ENCODE measurements at regions of chr1 and their contacts with region 1.

Region 1: DNA sequence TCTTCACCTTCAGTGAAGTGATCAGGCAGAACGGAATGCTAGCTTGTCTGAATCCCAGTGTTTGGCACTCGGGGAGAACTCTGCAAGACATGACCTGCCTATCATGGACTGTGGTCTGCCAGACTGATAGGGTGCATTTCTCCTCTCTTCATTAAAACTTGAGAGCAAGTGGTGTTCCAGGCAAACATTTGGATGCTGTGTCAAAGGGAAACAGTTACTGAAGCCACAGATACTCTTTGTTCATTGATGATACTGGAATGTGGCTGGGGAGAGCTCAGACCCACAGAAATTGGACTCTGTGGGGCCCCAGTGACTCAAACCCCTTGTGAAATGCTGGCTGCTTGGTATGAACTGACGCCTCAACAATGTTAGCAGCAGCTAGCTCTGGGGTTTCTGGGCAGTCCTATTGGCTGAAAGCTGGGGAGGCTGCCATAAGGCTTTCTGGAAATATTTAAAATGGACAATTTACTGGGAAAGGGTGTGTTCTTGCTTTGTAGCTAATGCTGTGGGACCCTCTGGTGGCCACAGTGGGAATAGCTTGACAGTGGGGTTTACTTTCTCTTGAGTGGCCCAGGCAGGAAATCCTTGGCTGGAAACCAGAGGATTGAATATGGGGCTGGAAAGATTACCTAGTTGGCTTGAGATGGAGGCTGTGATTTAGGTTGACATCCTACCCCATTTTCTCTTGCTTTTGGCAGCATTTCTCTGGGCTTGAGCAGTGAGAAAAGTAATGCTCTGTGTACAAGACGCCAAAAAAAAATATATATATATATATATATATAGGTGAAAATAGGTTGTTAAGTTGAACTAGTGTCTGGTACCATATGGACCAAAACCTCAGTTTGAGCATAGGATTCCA is 8.0 kb upstream of the S100A10 start:
- DNase-seq: peak; percentile 48 to 96 (median 81)

Region 2: DNA sequence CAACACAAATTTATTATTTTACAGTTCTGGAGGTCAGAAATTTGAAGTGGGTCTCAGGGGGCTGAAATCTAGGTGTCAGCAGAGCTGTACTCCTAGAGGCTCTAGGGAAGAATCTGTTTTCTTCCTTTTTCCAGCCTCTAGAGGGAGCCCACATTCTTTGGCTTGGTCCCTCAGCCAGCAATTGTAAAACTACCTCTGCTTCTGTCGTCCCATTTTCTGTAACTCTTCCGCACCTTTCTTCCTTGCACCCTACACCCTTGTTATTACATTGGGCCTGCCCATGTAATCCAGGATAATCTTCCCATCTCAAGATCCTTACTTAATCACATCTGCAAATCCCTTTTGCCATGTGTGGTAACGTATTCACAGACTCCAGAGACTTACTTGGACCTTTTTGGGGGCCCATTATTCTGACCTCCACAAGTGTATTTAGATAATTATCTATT is 67.5 kb before region 1 on chr1:
- intact Hi-C with region 1: loop called (anchors 2 kb)
- DNase-seq: peak in 2 of 10 donors; percentile 5 to 15

Measured in posterior cingulate gyrus (tissue), 11 donors.